Cardiac septum (tissue), 1 donor: ENCODE measurements at regions of chr2 and their contacts with region 1.

Region 1: DNA sequence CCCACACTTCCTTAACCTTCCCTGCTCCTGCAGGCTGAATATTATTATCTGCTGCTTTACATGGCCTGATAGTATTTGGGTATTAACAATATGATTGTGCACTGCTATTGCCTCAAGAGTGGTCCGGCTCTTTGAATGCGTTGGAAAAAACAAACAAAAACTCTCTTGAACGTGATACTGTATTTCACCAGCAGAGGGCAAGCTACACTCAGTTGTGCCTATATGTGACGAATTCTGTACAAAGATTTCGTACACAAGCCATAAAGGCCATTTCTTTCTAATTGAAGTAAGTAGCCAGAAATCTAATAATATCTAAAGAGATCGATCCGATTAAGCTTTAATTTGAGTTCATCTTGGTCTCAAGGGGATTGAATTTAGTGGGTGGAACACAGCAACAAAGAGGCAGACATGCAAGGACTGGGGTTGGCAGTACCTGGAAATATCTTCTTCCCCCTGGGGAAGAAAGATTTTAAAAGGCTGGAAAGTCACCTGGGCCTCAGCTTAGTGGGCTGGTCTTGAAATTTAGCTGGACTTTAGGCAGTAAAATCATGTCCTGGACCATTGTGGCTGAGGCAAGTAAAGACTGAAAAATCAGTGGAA is 49.3 kb upstream of the RAB6D start:
- DNase-seq: no peak

Region 2: DNA sequence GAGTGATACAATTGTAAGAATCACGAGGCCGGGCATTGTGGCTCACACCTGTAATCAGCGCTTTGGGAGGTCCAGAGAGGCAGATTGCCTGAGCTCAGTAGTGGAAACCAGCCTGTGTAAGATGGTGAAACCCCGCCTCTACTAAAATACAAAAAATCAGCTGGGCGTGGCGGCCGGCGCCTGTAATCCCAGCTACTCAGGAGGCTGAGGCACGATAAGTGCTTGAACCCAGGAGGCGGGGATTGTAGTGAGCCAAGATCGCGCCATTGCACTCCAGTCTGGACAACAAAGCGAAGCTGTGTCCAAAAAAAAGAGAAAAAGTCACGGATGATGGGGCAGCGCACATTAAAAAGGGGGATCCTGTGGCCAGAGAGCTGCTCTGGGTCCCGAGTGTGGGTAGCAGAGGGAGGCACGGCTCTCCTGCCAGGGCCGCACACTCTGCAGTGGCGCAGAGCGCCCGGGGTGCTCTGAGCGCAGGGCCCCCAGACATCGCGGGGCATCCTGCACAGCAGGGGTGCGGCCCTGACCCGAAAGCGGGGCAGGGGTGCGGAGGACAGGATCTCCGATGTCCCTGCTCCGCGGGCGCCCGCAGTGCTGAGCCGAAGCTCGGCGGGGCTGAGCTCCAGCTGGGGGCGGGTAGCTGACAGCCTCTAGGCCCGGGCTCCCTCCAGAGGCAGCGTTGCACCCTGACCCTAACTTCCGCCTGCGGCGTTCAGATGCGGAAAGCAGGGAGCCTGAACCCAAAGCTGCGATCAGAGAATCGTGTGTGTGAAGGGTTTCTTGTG is 18.9 kb before region 1 on chr2:
- intact Hi-C with region 1: no loop called
- DNase-seq: no peak

Region 3: DNA sequence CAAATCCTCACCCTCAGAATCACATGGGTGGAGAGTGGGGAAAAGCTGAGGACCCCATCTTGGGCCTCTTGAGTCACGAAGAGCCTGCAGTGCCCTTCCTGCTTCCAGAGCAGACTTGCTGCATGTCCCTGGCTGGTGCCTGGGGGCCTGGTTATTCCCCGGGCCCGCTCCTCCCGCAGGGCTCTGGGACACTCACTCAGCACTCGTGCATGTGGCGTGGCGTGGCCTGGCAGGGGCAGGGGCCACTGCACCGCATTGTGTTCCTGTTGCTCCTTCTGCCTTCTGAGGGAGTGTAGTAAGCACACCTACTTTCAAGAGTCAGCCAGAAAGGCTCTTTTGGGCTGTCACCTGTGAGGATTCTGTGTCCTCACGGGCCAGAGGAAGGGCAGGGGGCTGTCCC is 96.4 kb after region 1 on chr2:
- intact Hi-C with region 1: loop called (anchors 5 kb)
- DNase-seq: no peak